GM12878 (cell line): ENCODE measurements at regions of chr1 and their contacts with region 1.

Region 1: DNA sequence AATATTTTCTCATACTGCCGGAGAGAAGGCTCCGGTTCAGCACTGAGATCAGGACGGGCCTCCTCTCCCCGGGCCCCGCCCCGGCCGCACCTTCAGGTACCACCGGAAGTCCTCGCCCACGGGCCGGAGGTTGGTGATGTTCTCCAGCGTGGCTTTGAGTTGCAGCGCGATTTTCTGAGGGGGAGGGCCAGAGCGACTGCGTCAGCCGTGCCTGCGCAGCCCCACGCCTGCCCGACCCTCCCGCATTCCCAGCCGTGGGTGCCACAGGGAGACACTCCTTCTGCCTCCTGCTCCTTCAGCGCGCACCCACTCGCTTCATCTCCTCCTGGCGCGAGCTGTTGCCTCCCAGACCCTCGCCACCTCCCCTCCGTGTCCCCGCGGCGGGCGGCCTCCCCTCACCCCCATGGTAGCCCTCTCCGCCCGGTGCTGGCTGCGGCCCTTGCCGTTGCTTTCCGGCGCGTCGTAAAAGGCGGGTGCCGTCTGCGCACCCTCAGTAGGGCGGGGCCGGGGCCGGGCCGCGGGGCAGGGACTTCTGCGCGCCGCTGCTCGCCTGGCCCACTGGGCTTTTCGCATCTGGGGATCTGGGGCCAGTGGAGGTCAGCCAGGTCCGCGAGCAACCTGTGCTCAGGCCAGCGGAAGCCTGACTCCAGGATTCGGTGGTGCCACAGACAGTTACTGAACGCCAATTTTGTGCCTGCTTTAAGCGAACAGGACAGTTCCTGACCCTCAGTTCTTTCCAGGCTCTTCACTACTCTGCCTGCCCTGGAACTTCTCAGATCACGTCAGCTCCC is at the start of gene CZIB:
- DNase-seq: peak; percentile 75
- ATAC-seq: peak; percentile 96
- H3K4me3 ChIP-seq: peak within 1 kb of the TSS; percentile 80
- H3K27ac ChIP-seq: peak within 1 kb of the TSS; percentile 95
- H3K4me1 ChIP-seq: 0 out of 2 replicates have a peak, but pooled peaks cover 4% of the 10 kb centered on the region
- H3K27me3 ChIP-seq: no peaks in the 10 kb centered on the region
- CTCF ChIP-seq: no peak
- EP300 ChIP-seq: no peak
- POLR2A ChIP-seq: peak; percentile 99
- RAD21 ChIP-seq: no peak
- polyA plus RNA-seq, gene CZIB: 55.1 to 68.3 TPM

Region 2: GRCh38 chr1:53043271-53043670 is 177.1 kb before region 1 on chr1:
- CTCF ChIA-PET with region 1: no interaction called
- POLR2A ChIA-PET with region 1: no interaction called
- RAD21 ChIA-PET with region 1: no interaction called
- SMC1A ChIA-PET with region 1: no interaction called
- in situ Hi-C with region 1: no loop called
- intact Hi-C with region 1: no loop called
- DNase-seq: no peak
- ATAC-seq: no peak
- H3K4me3 ChIP-seq: no peak overlapping the region
- H3K27ac ChIP-seq: no peak overlapping the region
- H3K4me1 ChIP-seq: no peaks in the 10 kb centered on the region
- H3K27me3 ChIP-seq: no peaks in the 10 kb centered on the region
- CTCF ChIP-seq: no peak
- EP300 ChIP-seq: no peak
- POLR2A ChIP-seq: no peak
- RAD21 ChIP-seq: no peak

Region 3: DNA sequence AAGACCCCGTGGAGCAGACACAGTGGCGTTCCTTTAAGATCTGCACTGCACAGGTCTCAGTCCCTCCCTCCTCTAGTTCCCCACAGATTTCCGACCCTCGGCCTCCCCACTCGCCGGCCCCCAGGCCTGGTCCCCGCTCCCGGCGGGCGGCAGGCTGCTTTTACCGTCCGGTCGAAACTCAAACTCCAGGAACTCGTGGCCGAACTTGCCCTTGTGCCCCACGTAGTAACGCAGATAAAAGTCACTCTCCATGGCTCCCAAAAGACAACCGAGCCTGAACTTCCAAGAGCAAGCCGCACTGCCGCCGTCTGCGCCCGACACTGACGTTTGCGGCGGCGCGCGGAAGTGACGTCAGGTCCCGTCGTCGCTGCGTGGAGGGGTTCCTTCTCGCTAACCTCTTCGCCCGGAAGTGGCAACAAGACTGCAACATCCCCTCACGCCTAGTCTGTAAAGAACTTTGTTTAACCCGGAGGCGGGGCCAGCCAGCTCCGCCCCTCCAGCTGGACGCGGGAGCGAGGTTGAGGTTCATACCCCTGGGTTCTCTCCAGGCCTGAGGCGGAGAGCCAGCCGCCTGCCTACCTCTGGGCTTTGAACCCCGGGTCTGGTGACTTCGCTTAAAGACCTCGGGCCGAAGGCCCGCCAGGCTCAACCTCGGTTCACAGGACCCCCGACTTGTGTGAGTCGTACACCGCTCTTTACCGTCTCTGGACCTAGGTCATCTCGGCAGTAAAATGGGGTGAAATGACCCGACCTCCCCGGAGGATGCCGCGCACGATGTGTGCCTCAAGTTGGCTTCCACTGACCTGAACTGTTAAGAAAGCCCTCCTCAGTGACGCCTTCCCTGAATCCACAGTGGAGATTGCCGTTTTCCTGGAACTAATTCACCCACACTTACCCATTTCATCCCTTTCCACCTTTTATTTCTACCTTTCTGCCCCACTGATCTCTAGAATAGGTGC is 18.1 kb after region 1 on chr1 and contains the start of gene MAGOH:
- CTCF ChIA-PET with region 1: interaction called, 4 read pairs
- POLR2A ChIA-PET with region 1: interaction called, 6 read pairs
- RAD21 ChIA-PET with region 1: interaction called, 3 read pairs
- SMC1A ChIA-PET with region 1: interaction called, 6 read pairs
- in situ Hi-C with region 1: no loop called
- intact Hi-C with region 1: loop called (anchors 1 kb)
- DNase-seq: peak; percentile 76
- ATAC-seq: peak; percentile 99
- H3K4me3 ChIP-seq: peak within 1 kb of the TSS; percentile 94
- H3K27ac ChIP-seq: peak within 1 kb of the TSS; percentile 66
- H3K4me1 ChIP-seq: peaks cover 4% of the 10 kb centered on the region
- H3K27me3 ChIP-seq: no peaks in the 10 kb centered on the region
- CTCF ChIP-seq: no peak
- EP300 ChIP-seq: no peak
- POLR2A ChIP-seq: peak; percentile 89
- RAD21 ChIP-seq: no peak
- polyA plus RNA-seq, gene MAGOH: 85.4 to 261 TPM

Region 4: DNA sequence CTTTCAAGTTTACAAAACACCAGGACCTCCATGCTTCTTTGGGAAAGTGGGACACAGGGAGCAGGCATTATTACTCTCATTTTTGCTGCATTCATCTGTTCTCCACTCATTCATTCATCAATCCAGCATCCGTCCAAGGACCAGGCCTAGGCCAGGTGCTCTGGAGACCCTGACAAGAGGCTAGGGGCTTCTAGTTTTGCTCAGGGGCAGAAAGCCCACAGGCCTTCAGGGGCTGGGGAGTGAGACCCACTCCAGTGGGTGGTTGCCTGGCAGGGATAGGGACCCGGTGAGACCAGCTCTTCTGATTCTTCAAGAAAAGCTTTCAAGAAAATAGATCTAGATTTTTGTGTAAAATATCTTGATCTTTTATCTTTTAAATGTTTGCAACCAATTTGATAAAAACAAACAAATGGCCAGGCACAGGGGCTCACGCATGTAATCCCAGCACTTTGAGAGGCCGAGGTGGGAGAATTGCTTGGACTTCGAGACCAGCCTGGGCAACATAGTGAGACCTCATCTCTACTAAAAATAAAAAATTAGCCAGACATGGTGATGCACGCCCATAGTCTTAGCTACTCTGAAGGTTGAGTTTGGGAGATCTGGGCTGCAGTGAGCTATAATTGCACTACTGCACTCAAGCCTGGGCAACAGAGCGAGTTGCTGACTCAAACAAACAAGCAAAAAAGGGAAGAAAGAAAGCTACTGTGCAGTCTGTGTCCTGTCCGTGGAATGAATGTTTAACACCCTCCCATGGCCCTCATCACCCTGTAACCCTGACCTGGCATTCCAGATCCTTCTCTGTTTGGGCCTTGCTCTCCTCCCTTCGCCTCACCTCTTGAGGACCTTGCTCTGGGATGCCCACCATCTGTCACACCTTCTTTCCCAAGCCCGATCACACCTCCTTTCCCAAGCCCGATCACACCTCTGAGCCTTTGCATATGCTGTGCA is 124.8 kb after region 1 on chr1:
- CTCF ChIA-PET with region 1: no interaction called
- POLR2A ChIA-PET with region 1: no interaction called
- RAD21 ChIA-PET with region 1: no interaction called
- SMC1A ChIA-PET with region 1: no interaction called
- in situ Hi-C with region 1: no loop called
- intact Hi-C with region 1: no loop called
- DNase-seq: peak; percentile 56
- ATAC-seq: peak; percentile 96
- H3K4me3 ChIP-seq: no peak overlapping the region
- H3K27ac ChIP-seq: peak overlapping the region; percentile 33
- H3K4me1 ChIP-seq: peaks cover 17% of the 10 kb centered on the region
- H3K27me3 ChIP-seq: no peaks in the 10 kb centered on the region
- CTCF ChIP-seq: no peak
- EP300 ChIP-seq: peak in 1 of 2 experiments; percentile 30; a peak in 1 of 4 replicates
- POLR2A ChIP-seq: no peak
- RAD21 ChIP-seq: no peak